ENCODE measurements at regions of chr18 and their contacts with region 1.

Region 1: GRCh38 chr18:3604498-3605408 is 154.8 kb downstream of the TGIF1 start:
- DNase-seq: no peak
- H3K4me3 ChIP-seq: peak overlapping the region in 3 of 4 donors; percentile 18 to 48 (median 21)
- H3K27ac ChIP-seq: peak overlapping the region; percentile 91 to 96 (median 94)
- H3K4me1 ChIP-seq: peaks cover 10 to 55% (median 34%) of the 10 kb centered on the region in 4 donors
- H3K27me3 ChIP-seq: no peaks in the 10 kb centered on the region
- CTCF ChIP-seq: no peak
- EP300 ChIP-seq: no peak
- POLR2A ChIP-seq: peak; percentile 27

Region 2: GRCh38 chr18:2857491-2858131 is 747.1 kb before region 1 on chr18:
- in situ Hi-C with region 1: no loop called
- intact Hi-C with region 1: loop called (anchors 5 kb)
- DNase-seq: peak; percentile 67
- H3K4me3 ChIP-seq: no peak overlapping the region
- H3K27ac ChIP-seq: peak overlapping the region; percentile 28 to 66 (median 36)
- H3K4me1 ChIP-seq: peaks cover 0 to 4% (median 0%) of the 10 kb centered on the region in 4 donors
- H3K27me3 ChIP-seq: no peaks in the 10 kb centered on the region
- CTCF ChIP-seq: no peak
- EP300 ChIP-seq: no peak
- POLR2A ChIP-seq: no peak

Region 3: GRCh38 chr18:4573735-4574134 is 969.0 kb after region 1 on chr18:
- in situ Hi-C with region 1: no loop called
- intact Hi-C with region 1: no loop called
- DNase-seq: no peak
- H3K4me3 ChIP-seq: no peak overlapping the region
- H3K27ac ChIP-seq: no peak overlapping the region
- H3K4me1 ChIP-seq: no peaks in the 10 kb centered on the region
- H3K27me3 ChIP-seq: no peaks in the 10 kb centered on the region
- CTCF ChIP-seq: no peak
- EP300 ChIP-seq: no peak
- POLR2A ChIP-seq: no peak